Activated T-helper 1 cell treated with anti-CD3 and anti-CD28 coated beads, Interleukin-12 subunit alpha, Interleukin-12 subunit beta, Interleukin-2, Interleukin-4 antibody, amounts not matched to agents 30 ng/mL and 10 ng/mL and 1 ng/mL, durations not matched to agents 14 hours and 24 hours and 36 hours (primary cell): ENCODE measurements at regions of chr21 and their contacts with region 1.

Region 1: DNA sequence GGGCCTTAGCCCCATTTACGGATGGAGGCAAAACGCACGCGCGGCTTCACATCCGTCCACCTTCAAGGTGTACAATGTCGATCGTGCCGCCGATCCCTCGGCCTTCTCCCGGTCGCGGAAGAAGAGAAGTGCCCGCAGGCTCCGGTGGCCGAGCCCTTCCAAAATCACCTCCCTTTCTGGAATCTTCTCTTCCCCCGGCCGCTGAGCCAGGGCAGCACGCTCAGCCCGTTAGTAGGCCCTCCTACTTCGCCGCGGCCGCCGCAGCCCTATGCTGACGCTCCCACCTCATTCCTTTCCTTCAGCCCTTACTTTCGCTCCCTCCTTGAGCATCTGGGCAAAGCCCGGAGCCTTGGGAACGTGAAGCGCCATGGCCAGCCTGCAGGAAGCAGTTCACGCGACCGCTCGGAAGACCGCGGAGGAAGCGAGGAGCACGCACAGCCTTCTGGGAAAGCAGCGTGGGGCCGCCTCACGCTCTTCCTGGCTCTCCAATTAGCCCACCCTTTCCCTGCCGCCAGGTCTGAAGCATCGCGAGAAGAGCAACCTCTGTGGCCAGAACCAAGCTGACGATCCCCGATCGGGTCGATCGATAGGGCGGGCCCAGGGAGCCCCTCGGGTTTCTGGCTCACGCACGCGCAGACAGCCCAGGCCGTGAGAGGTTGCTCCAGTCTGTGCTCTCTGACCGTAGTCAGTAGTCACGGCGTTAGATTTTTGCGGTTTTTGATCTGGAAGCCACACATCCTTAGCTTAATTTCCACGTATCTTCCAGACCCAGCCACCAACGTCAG is at the start of gene CCT8:
- DNase-seq: peak; percentile 98
- H3K4me3 Mint-ChIP-seq: peak within 1 kb of the TSS; percentile 99
- H3K27ac Mint-ChIP-seq: peak within 1 kb of the TSS; percentile 98
- H3K4me1 Mint-ChIP-seq: peaks cover 58% of the 10 kb centered on the region
- H3K27me3 Mint-ChIP-seq: no peaks in the 10 kb centered on the region
- total RNA-seq, gene CCT8: 394 and 400 TPM in 2 replicates

Region 2: DNA sequence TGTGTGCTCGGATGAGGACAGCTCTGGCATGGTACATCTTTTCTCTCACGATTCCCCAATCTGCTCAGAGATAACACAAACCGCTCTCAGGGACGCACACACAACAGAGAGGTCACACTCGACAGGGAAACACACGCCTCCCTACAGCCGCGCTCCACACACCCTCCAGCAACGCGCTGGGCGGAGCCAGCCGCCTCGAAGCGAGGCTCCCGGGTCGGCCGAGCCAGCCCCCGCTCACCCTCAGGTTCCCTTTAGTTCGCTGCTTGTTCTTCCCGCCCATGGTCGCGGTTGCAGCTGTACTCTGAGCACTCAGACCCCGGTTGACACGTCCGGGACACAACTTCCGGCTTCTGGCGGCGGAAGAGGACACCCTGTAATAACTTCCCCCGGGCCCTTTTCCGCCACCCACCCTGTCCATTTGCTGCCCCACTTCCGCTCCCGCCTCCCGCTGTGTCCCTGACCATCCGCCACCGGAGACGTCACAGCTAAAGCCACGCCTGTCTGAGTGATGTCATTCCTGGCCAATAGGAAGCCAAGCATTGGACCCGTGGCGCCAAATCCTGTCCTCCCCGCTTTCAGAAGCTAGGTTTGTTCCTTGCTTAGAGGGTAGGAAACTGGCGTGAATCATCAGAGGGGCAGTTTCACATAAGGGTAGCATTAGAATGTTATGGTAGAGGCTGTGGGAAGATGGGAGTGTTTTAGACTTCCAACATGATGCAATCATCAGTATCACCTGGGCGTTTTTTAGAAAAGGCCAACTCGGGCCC is 80.7 kb before region 1 on chr21 and contains the start of gene LTN1:
- intact Hi-C with region 1: loop called (anchors 1 kb)
- DNase-seq: peak; percentile 98
- H3K4me3 Mint-ChIP-seq: peak within 1 kb of the TSS; percentile 97
- H3K27ac Mint-ChIP-seq: peak within 1 kb of the TSS; percentile 97
- H3K4me1 Mint-ChIP-seq: peaks cover 47% of the 10 kb centered on the region
- H3K27me3 Mint-ChIP-seq: no peaks in the 10 kb centered on the region
- total RNA-seq, gene LTN1: 25.6 and 28.4 TPM in 2 replicates

Region 3: GRCh38 chr21:29002442-29003144 is 70.8 kb before region 1 on chr21:
- intact Hi-C with region 1: loop called (anchors 2 kb)
- DNase-seq: peak; percentile 93
- H3K4me3 Mint-ChIP-seq: peak overlapping the region; percentile 90
- H3K27ac Mint-ChIP-seq: peak overlapping the region; percentile 97
- H3K4me1 Mint-ChIP-seq: peaks cover 5% of the 10 kb centered on the region
- H3K27me3 Mint-ChIP-seq: no peaks in the 10 kb centered on the region

Region 4: DNA sequence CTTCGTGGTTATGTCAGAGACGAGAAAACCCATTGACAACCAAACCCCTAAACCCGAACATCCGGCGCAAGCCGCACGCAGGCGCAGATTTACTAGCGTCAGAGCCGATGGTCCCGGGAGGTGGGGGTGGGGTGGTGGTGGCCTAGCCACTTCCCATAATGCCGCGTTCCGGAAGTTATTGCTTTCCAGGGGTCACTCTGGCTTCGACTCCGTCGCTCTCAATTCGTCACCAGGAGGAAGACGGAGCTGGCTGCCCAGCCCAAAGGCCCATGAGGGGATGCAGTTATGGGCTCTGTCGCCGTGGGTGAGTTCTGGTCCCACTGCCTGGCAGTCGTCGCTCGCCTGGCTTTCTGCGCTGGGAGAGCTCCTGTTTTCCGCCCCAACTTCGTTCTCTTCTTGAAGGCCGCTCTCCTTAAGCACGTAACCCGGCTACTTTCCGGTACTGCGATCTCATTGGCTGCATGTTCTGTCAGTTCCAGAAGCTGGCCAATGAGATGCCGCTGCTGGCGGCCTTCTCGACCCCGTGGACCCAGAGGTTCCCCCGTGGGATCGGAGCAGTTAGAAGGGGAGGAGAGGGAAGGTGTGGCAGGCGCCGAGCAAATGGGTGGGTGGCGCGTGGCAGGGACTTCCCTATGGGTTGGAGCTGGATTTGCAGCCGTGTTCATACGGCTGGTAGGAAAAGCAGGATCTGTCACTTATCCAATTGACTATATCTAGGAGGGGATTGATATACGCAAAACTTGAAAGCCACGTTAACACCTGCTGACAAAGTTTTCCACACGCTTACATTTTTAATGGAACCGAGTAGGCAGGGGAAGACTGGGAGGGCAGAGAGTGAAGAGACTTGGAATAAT is 48.7 kb before region 1 on chr21 and contains the start of gene USP16:
- intact Hi-C with region 1: loop called (anchors 1 kb)
- DNase-seq: peak; percentile 95
- H3K4me3 Mint-ChIP-seq: peak within 1 kb of the TSS; percentile 99
- H3K27ac Mint-ChIP-seq: peak within 1 kb of the TSS; percentile 97
- H3K4me1 Mint-ChIP-seq: peaks cover 39% of the 10 kb centered on the region
- H3K27me3 Mint-ChIP-seq: no peaks in the 10 kb centered on the region
- total RNA-seq, gene USP16: 44.7 and 48.7 TPM in 2 replicates

Region 5: GRCh38 chr21:29343519-29343918 is 270.1 kb after region 1 on chr21:
- intact Hi-C with region 1: loop called (anchors 5 kb)
- DNase-seq: no peak
- H3K4me3 Mint-ChIP-seq: no peak overlapping the region
- H3K27ac Mint-ChIP-seq: no peak overlapping the region
- H3K4me1 Mint-ChIP-seq: peaks cover 32% of the 10 kb centered on the region
- H3K27me3 Mint-ChIP-seq: no peaks in the 10 kb centered on the region

Region 6: GRCh38 chr21:29372063-29372802 is 298.8 kb after region 1 on chr21:
- intact Hi-C with region 1: loop called (anchors 5 kb)
- DNase-seq: peak; percentile 39
- H3K4me3 Mint-ChIP-seq: no peak overlapping the region
- H3K27ac Mint-ChIP-seq: no peak overlapping the region
- H3K4me1 Mint-ChIP-seq: peaks cover 30% of the 10 kb centered on the region
- H3K27me3 Mint-ChIP-seq: no peaks in the 10 kb centered on the region

Region 7: GRCh38 chr21:29656504-29657239 is 583.3 kb after region 1 on chr21:
- intact Hi-C with region 1: loop called (anchors 10 kb)
- DNase-seq: peak; percentile 14
- H3K4me3 Mint-ChIP-seq: peak overlapping the region; percentile 45
- H3K27ac Mint-ChIP-seq: peak overlapping the region; percentile 82
- H3K4me1 Mint-ChIP-seq: peaks cover 39% of the 10 kb centered on the region
- H3K27me3 Mint-ChIP-seq: no peaks in the 10 kb centered on the region

Region 8: DNA sequence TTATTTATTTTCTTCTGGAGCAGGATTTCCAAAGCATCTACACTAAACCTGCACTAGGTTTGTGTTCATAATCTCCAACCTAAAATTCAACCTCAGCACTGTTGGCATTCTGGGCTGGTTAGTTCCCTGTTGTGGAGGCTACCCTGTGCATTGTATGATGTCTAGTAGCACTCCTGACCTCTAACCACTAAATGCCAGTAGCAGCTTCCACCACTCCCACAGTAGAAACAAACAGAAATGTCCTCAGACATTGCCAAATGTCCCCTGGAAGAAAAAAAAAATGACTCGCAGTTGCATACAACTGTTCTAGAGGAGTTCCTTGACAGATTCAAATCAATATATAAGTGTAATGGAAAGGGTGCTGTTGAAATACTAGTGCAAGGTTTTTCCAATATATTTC is 847.5 kb after region 1 on chr21:
- intact Hi-C with region 1: no loop called
- DNase-seq: no peak
- H3K4me3 Mint-ChIP-seq: no peak overlapping the region
- H3K27ac Mint-ChIP-seq: no peak overlapping the region
- H3K4me1 Mint-ChIP-seq: no peaks in the 10 kb centered on the region
- H3K27me3 Mint-ChIP-seq: no peaks in the 10 kb centered on the region